ENCODE measurements at regions of chr20 and their contacts with region 1.

Region 1: GRCh38 chr20:36754656-36755222 is 8.8 kb upstream of the NDRG3 start:
- DNase-seq: peak; percentile 40 to 55
- H3K4me3 ChIP-seq: no peak overlapping the region
- H3K27ac ChIP-seq: no peak overlapping the region
- H3K4me1 ChIP-seq: no peaks in the 10 kb centered on the region
- H3K27me3 ChIP-seq: no peaks in the 10 kb centered on the region
- CTCF ChIP-seq: peak; percentile 79

Region 2: DNA sequence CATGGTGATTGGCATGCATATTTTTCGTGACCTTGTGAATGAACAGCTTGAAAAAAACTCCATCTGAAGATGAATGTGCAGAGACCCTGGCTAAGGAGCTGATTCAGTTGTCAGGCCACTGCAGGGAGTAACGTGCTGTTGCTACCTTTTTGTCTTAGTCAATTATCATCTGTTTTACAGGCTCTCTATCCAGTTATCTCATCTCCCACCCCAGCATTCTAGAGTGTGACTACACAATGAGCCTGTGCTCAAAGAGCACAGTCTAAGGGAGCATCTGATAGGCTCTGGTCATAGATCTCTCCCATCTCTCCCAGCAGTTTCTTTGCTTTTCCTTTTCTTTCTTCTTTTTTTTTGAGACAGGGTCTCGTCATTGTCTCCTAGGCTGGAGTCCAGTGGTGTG is 54.3 kb before region 1 on chr20:
- CTCF ChIA-PET with region 1: interaction called, 11 read pairs
- POLR2A ChIA-PET with region 1: no interaction called
- intact Hi-C with region 1: no loop called
- DNase-seq: no peak
- H3K4me3 ChIP-seq: no peak overlapping the region
- H3K27ac ChIP-seq: no peak overlapping the region
- H3K4me1 ChIP-seq: no peaks in the 10 kb centered on the region
- H3K27me3 ChIP-seq: no peaks in the 10 kb centered on the region
- CTCF ChIP-seq: no peak

Region 3: DNA sequence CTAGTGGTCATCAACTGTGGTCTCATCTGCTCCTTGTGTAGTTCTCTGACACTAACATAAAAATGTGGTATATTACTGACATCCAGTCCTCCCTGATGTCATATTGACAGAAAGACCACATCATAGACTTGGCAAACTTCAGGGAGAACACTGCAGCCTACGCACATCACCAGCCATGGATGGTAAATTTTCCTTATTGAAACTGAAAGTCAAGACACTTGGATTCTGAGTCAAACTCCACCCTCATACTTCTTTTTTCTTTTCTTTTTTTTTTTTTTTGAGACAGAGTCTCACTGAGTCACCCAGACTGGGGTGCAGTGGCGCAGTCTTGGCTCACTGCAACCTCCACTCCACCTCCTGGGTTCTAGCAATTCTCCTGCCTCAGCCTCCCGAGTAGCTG is 34.2 kb before region 1 on chr20:
- CTCF ChIA-PET with region 1: no interaction called
- POLR2A ChIA-PET with region 1: no interaction called
- intact Hi-C with region 1: no loop called
- DNase-seq: no peak
- H3K4me3 ChIP-seq: no peak overlapping the region
- H3K27ac ChIP-seq: no peak overlapping the region
- H3K4me1 ChIP-seq: no peaks in the 10 kb centered on the region
- H3K27me3 ChIP-seq: no peaks in the 10 kb centered on the region
- CTCF ChIP-seq: no peak

Region 4: DNA sequence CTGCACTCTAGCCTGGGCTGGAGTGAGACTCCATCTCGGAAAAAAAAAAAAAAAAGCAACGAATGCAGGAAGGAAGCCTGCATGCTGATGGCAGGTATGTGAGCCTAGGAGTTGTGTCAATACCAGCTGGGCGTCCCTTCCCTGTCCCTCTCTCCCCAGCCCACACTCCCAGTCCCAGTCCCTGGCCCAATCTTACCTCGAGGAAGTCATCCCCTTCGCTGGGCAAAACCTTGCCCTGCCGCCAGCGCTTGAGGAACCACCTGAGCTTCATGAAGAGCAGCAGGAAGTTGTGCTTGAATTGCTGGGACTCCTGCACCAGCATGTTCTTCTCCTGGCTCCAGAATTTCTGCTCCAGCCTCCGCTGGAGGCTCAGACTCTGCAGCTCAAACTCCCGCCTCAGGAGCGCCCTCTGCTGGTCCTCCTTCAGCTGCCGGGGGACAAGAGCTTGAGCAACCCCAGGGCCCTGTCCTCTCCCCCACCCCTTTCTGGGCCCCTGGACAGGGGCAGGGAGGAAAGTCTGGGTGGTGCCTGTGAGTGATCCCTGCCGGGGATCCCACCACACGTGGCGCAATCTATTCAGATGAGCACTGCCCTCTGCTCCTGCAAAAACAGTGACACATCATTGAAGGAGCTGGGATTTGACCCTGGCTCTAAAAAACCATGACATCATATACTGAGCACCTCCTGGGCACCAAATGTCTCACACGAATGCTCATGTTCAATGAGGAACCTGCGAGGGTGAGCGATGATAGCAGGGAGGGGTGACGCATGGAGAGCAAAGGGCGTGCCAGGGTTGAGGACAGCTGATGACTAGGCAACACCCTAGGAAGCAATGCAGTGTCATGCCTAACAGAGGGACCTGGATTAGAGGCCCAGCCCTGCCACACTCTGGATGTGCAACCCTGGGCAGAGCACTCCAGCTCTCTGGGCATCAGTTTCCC is 53.8 kb after region 1 on chr20:
- CTCF ChIA-PET with region 1: no interaction called
- POLR2A ChIA-PET with region 1: no interaction called
- intact Hi-C with region 1: no loop called
- DNase-seq: peak; percentile 82 to 96
- H3K4me3 ChIP-seq: no peak overlapping the region
- H3K27ac ChIP-seq: peak overlapping the region; percentile 89
- H3K4me1 ChIP-seq: peaks cover 42% of the 10 kb centered on the region
- H3K27me3 ChIP-seq: no peaks in the 10 kb centered on the region
- CTCF ChIP-seq: peak; percentile 94